ENCODE measurements at regions of chr7 and their contacts with region 1.

Region 1: DNA sequence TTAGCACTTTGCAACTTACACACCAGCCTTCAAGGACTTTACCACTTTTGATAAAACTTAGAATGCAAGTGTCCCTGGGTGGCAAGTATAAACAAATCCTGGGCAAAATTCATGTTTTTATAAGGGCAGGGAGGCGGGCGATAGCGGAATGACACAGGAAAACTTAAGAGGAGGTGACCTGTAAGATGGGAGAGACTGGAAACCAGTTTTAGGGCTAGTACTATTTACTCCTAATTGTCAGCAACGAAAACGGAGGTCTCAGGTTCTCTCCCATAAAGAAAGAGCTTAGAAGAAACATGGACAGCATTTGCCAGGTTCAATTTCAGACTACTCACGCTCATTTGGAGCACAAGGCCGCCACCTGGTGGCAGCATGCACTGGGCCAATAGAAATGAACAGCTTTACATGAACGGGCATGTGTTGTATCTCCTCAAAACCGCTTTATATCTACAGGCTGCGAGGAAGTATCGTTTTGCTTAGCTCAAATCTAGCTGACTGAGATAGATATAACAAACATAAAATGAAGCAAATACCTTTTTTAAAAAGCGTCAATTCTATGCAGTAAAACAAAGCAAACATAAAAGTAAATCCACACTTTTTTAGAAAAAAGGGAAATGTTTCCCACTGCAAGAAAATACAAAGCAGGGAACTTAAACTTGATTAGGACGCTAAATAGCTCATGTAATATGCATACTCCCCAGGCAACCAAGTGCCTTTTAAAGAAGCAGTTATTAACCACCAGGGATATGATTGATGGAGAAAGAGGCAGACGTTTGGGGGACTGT is 37.6 kb upstream of the SVOPL start:
- DNase-seq: peak; percentile 90
- ATAC-seq: peak; percentile 97
- H3K4me3 Mint-ChIP-seq: no peak overlapping the region
- H3K27ac Mint-ChIP-seq: peak overlapping the region; percentile 14
- H3K4me1 Mint-ChIP-seq: peaks cover 13% of the 10 kb centered on the region
- H3K27me3 Mint-ChIP-seq: no peaks in the 10 kb centered on the region

Region 2: DNA sequence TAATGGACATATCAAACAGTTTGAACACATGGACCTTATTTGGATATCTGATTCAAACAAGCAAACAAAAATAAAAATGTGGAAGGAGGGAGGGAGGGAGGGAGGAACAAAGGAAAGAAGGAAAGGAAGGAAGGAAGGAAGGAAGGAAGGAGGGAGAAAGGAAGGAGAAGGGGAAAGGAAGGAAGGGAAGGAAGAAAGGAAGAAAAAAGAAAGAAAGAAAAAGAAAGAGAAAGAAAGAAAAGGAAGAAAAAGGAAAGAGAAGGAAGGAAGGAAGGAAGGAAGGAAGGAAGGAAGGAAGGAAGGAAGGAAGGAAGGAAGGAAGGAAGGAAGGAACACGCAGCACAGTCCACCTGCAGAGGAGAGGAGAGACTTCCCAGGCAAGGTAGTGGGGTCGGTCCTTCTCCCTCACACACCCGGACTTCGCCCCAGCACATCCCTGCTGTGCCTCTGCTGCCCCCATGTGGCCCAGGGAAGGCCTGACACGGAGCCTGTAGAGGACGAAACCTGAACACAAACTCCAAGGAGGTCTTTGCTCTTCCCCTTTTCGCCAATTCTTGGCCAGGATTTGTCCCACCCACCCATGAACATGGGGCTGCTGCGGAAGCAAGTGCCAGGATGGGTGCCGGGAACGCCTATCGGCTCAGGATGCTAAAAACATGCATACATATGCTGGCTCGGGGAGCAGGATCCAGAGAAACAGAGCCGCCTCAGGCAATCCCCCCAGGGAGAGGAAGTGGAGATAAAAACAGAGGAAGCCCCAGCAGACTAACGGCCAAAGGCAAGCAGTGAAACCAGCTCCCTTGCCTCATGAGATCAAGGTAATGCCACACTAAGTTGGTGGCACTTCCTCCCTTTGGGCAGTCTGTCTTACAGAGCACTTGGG is 839.7 kb before region 1 on chr7:
- CTCF ChIA-PET with region 1: interaction called, 21 read pairs
- POLR2A ChIA-PET with region 1: no interaction called
- DNase-seq: peak; percentile 84
- ATAC-seq: peak; percentile 95
- H3K4me3 Mint-ChIP-seq: peak overlapping the region; percentile 50
- H3K27ac Mint-ChIP-seq: peak overlapping the region; percentile 80
- H3K4me1 Mint-ChIP-seq: peaks cover 33% of the 10 kb centered on the region
- H3K27me3 Mint-ChIP-seq: no peaks in the 10 kb centered on the region

Region 3: DNA sequence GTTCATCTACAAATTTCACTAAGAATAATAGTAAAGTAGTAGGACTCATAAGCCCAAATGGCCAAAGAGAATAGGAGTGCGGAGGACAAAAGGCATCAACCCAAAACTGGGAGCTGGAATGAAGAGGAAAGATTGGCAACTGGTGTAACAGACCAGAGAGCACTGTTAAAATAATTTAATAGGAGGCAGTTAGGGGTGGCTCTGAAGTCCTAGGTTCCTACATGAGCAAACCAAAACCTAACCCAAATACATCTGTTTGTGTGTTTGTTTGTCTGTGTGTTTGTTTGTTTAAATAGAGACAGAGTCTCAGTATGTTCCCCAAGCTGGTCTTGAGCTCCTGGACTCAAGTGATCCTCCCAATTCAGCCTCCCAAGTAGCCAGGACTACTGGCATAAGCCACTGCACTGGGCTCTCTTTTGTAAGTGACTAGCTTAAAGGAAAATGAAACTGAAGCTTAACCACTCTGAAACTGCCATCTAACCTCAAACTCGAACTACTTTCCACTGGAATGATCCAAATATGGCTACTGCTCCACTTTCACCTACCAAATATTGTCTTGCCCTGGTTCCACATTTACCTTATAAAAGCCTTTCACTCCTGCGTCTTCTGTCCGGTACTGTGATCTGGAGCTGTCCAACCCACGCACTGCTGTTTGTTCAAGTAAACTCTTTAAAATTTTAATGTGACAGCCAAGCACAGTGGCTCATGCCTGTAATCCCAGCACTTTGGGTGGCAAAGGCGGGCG is 567.6 kb before region 1 on chr7:
- CTCF ChIA-PET with region 1: interaction called, 21 read pairs
- POLR2A ChIA-PET with region 1: no interaction called
- DNase-seq: peak; percentile 31
- ATAC-seq: peak; percentile 86
- H3K4me3 Mint-ChIP-seq: peak overlapping the region; percentile 4
- H3K27ac Mint-ChIP-seq: peak overlapping the region; percentile 41
- H3K4me1 Mint-ChIP-seq: peaks cover 38% of the 10 kb centered on the region
- H3K27me3 Mint-ChIP-seq: peaks cover 5% of the 10 kb centered on the region

Region 4: DNA sequence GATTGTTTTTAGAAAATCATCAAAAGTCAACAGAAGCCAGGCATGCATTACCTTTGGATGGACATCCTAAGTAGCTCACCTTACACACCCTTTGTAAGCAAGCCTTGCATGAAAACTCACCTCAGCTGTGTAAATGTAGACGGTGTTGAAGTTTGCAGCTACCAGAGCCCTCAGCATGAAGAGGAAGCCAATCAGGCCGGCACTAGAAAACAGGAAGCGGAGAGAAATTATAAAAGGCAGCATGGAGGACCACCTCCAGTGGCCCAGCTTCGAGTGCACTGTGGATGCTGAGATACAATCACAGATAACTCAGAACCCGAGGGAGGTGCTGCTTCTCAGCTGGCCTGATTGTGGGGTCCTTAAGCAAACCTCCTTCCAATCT is 112.9 kb before region 1 on chr7:
- CTCF ChIA-PET with region 1: interaction called, 14 read pairs
- POLR2A ChIA-PET with region 1: no interaction called
- DNase-seq: peak; percentile 69
- ATAC-seq: peak; percentile 80
- H3K4me3 Mint-ChIP-seq: peak overlapping the region; percentile 69
- H3K27ac Mint-ChIP-seq: peak overlapping the region; percentile 90
- H3K4me1 Mint-ChIP-seq: peaks cover 53% of the 10 kb centered on the region
- H3K27me3 Mint-ChIP-seq: no peaks in the 10 kb centered on the region

Region 5: DNA sequence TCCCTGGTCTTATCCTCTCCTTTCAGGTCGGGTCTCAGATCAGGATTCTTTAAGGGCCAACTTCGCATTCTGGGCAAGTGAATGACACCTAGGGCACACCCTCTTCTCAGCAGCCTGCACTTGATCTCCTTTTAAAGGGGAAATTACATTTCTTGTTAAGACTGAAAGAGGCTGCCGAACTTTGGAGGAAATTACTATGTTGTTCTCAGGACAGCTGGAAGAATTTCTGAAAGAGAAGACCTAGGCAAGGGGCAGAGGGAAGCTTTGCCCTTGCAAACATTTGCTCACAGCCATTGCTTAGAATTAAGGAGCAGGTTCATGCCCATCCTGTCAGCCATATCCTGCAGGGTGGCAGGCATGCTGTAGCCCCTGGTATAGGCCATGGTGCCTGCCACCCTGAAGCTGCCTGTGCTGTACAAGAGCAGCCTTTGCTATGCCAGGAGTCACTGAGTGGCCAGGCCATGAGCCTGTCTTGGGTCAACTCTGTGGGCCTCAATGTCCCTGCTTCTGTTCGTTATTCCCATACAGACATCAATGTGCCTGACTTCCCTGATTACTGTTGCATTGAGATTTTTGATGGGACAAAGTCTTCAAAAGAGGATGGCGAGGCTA is 37.3 kb before region 1 on chr7 and contains the start of gene SVOPL:
- CTCF ChIA-PET with region 1: no interaction called
- POLR2A ChIA-PET with region 1: no interaction called
- DNase-seq: no peak
- ATAC-seq: no peak
- H3K4me3 Mint-ChIP-seq: no peak within 1 kb of the TSS
- H3K27ac Mint-ChIP-seq: no peak within 1 kb of the TSS
- H3K4me1 Mint-ChIP-seq: no peaks in the 10 kb centered on the region
- H3K27me3 Mint-ChIP-seq: no peaks in the 10 kb centered on the region
- total RNA-seq, gene SVOPL: 3.5 to 4.3 TPM

Region 6: GRCh38 chr7:138752568-138753518 is 14.1 kb after region 1 on chr7:
- CTCF ChIA-PET with region 1: interaction called, 40 read pairs
- POLR2A ChIA-PET with region 1: interaction called, 5 read pairs
- DNase-seq: peak; percentile 95
- ATAC-seq: peak; percentile 94
- H3K4me3 Mint-ChIP-seq: peak overlapping the region; percentile 16
- H3K27ac Mint-ChIP-seq: peak overlapping the region; percentile 87
- H3K4me1 Mint-ChIP-seq: peaks cover 68% of the 10 kb centered on the region
- H3K27me3 Mint-ChIP-seq: peaks cover 4% of the 10 kb centered on the region

Region 7: DNA sequence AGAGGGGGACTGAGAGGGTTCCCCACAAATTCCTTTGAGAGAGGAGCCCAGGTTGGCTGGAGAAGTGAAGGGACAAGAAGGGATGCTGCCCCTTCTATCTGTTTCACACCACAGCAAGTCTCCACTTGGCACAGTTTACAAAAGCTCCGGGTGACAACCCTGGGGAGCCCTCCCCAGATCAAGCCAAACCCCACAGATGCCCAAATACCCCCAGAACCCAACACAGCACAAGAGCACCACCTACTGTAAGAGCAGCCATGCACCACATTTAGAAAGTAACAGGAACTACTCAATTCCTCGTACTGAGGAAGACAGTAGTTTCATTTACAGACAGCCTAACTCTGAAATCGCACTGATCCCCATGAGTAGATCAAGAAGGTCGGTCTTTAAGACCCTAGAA is 127.1 kb after region 1 on chr7:
- CTCF ChIA-PET with region 1: interaction called, 15 read pairs
- POLR2A ChIA-PET with region 1: no interaction called
- DNase-seq: peak; percentile 69
- ATAC-seq: peak; percentile 85
- H3K4me3 Mint-ChIP-seq: no peak overlapping the region
- H3K27ac Mint-ChIP-seq: peak overlapping the region; percentile 73
- H3K4me1 Mint-ChIP-seq: peaks cover 10% of the 10 kb centered on the region
- H3K27me3 Mint-ChIP-seq: no peaks in the 10 kb centered on the region

Region 8: DNA sequence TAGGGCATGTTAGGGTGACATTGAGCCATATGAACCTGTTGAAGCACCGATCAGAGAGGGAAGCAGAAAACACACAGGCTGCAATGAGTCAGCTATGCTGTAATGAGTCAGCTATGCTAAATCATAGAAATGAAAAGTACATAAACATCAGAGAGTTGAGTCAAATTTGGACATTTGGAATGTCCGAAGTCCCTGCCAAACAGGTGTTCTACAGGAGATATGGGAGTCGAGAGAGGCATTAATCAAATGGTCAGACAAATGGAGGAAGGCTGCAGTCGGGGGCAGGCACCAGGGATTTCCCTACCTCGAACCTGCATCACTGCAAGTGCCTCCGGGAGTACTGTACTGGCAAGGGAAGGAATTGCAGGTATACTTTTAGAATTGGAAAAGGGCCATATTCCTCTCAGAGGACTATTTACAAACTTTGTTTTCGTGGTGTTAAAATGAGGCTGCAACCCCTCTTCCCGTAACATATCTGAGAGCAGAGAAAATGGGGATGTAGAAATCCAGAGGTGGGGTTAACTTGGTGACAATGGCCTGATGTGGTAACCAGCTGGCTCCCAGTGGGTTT is 379.6 kb after region 1 on chr7:
- CTCF ChIA-PET with region 1: no interaction called
- POLR2A ChIA-PET with region 1: no interaction called
- DNase-seq: no peak
- ATAC-seq: peak; percentile 29
- H3K4me3 Mint-ChIP-seq: no peak overlapping the region
- H3K27ac Mint-ChIP-seq: peak overlapping the region; percentile 91
- H3K4me1 Mint-ChIP-seq: peaks cover 19% of the 10 kb centered on the region
- H3K27me3 Mint-ChIP-seq: no peaks in the 10 kb centered on the region